CD4-positive, alpha-beta memory T cell (primary cell): ENCODE measurements at regions of chr12 and their contacts with region 1.

Region 1: DNA sequence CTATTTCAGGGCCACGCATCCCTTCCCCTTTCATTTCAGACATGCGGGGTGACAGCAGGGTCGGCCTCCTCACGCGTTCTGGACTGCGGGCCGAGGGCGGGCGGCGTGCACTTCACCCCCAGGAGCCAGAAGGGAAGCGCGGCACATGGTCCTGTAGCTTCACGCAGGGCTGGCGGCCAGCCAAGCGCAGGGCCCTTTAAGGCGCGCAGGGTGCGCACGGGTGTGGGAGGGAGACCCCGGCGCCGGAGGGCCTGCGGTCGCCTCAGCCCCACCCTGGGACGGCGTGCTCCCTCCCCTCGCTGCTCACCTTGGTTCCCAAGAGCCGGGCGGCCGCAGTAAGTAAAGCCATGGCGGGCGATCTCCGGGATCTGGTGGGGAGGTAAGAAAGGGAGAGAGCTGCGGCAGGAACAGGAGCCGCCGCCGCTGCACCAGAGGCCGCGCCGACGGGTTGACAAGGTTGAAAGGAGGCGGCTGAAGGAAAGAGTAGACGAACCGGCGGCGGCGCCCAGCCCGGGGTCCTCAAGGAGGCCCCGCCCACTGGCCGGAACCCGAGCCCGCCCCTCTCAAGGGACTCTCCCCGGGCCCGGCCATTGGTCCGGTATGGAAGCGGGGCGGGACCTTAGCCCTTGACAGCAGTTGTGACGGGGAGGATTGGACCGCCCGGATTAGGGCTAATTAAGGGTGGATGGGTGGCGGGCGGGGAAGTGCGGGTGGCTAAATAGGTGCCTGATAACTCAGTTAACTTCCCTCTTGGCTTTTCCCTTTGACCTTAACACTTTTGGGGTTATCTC is at the start of gene CS:
- DNase-seq: peak; percentile 98 to 99 (median 99)
- H3K4me3 ChIP-seq: peak within 1 kb of the TSS; percentile 79 to 97
- H3K4me3 Mint-ChIP-seq: peak within 1 kb of the TSS; percentile 90 to 97 (median 96)
- H3K27ac ChIP-seq: peak within 1 kb of the TSS; percentile 99
- H3K27ac Mint-ChIP-seq: peak within 1 kb of the TSS; percentile 95 to 99 (median 98)
- H3K4me1 ChIP-seq: peaks cover 57% of the 10 kb centered on the region
- H3K4me1 Mint-ChIP-seq: peaks cover 31 to 66% (median 50%) of the 10 kb centered on the region in 4 donors
- H3K27me3 ChIP-seq: no peaks in the 10 kb centered on the region
- H3K27me3 Mint-ChIP-seq: no peaks in the 10 kb centered on the region
- total RNA-seq, gene CS: 134 to 136 TPM

Region 2: DNA sequence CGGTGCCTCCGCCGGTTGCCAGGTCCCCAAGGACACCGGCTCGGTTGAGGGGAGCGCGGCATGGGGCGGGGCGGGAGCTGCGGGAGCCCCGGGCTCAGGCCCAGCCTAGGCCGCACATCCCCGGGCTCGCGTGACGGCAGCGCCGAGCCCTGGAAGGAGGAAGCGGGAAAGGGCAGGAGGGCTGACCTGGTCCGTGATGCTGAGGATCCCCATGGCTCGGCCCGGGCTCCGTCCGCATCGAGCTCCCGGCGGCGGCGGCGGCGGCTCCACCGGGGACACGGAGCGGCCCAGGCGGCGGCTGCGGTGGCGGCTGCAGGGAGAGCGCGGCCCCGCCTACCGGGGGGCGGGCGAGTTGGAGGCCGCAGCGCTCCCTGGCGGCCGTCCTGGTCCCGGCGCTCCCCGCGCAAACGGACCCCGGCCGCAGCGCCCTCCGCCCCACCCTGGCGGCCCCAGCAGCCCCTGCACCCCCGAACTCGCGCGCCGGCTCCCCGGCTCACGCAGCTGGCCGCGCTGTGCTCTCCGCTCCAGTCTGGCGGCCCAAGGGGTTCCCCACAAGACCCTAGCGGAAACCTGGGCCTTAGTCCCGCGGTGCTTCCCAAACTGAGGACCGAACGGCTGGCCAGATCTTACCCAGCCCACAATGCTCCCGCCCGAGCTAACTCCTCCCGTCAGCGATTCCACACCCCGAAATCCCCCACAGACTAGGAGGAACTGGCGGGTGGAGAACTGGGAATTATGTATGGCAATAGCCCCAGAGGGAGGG is 41.8 kb before region 1 on chr12 and contains the start of gene ANKRD52:
- CTCF ChIA-PET with region 1: interaction called, 5 read pairs
- POLR2A ChIA-PET with region 1: interaction called, 8 read pairs
- intact Hi-C with region 1: loop called (anchors 1 kb)
- DNase-seq: peak; percentile 76 to 87 (median 82)
- H3K4me3 ChIP-seq: peak within 1 kb of the TSS; percentile 85 to 95
- H3K4me3 Mint-ChIP-seq: peak within 1 kb of the TSS; percentile 89 to 97 (median 92)
- H3K27ac ChIP-seq: peak within 1 kb of the TSS; percentile 81
- H3K27ac Mint-ChIP-seq: peak within 1 kb of the TSS; percentile 82 to 95 (median 91)
- H3K4me1 ChIP-seq: peaks cover 21% of the 10 kb centered on the region
- H3K4me1 Mint-ChIP-seq: peaks cover 13 to 31% (median 19%) of the 10 kb centered on the region in 4 donors
- H3K27me3 ChIP-seq: no peaks in the 10 kb centered on the region
- H3K27me3 Mint-ChIP-seq: no peaks in the 10 kb centered on the region
- total RNA-seq, gene ANKRD52: 44.1 to 44.5 TPM

Region 3: GRCh38 chr12:56266693-56267442 is 33.2 kb before region 1 on chr12 and contains the start of gene COQ10A:
- CTCF ChIA-PET with region 1: interaction called, 5 read pairs
- POLR2A ChIA-PET with region 1: interaction called, 3 read pairs
- intact Hi-C with region 1: loop called (anchors 1 kb)
- DNase-seq: peak; percentile 89 to 96 (median 91)
- H3K4me3 ChIP-seq: peak within 1 kb of the TSS; percentile 27 to 90
- H3K4me3 Mint-ChIP-seq: peak within 1 kb of the TSS; percentile 89 to 99 (median 96)
- H3K27ac ChIP-seq: peak within 1 kb of the TSS; percentile 84
- H3K27ac Mint-ChIP-seq: peak within 1 kb of the TSS; percentile 90 to 99 (median 97)
- H3K4me1 ChIP-seq: peaks cover 14% of the 10 kb centered on the region
- H3K4me1 Mint-ChIP-seq: peaks cover 10 to 23% (median 16%) of the 10 kb centered on the region in 4 donors
- H3K27me3 ChIP-seq: no peaks in the 10 kb centered on the region
- H3K27me3 Mint-ChIP-seq: no peaks in the 10 kb centered on the region
- total RNA-seq, gene COQ10A: 35.3 to 38.6 TPM

Region 4: DNA sequence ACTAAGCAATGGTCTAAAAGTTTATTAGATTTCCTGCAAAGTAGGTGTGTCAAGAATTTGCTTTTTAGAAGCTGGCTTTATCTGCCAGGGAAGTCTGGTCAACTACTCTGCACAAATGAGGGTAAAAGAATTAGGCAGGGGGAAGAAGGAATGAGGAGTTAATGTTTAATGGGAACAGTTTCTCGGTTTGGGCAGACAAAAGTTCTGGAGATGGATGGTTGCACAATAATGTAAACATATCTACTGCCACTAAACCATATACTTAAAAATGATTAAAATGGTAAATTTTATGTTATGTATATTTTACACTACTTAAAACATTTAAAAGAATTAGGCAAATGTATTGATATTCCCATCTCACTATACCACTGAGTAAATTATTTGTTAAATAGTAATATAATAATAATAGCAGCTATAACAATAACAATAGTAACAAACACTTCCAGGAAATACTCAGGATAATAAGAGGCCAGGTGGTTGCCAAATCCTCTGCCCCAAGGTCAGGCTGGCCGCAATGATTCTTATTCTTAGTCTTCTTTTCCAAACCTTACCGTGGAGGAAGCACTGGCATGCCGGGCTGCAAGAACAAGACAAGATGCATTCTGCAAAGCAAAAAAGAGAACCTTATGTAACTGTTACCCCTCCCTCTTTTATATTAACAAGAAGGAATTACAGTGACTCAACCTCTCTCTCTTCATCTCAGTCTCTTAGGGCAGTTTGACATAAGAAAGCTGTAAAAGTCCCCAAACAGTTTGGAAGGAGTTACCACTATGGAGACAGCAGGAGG is 13.8 kb before region 1 on chr12:
- CTCF ChIA-PET with region 1: interaction called, 4 read pairs
- POLR2A ChIA-PET with region 1: interaction called, 10 read pairs
- intact Hi-C with region 1: loop called (anchors 1 kb)
- DNase-seq: no peak
- H3K4me3 ChIP-seq: no peak overlapping the region
- H3K4me3 Mint-ChIP-seq: no peak overlapping the region
- H3K27ac ChIP-seq: no peak overlapping the region
- H3K27ac Mint-ChIP-seq: peak overlapping the region in 6 of 7 donors; percentile 32 to 79 (median 60)
- H3K4me1 ChIP-seq: peaks cover 6% of the 10 kb centered on the region
- H3K4me1 Mint-ChIP-seq: peaks cover 6 to 18% (median 10%) of the 10 kb centered on the region in 4 donors
- H3K27me3 ChIP-seq: no peaks in the 10 kb centered on the region
- H3K27me3 Mint-ChIP-seq: no peaks in the 10 kb centered on the region

Region 5: DNA sequence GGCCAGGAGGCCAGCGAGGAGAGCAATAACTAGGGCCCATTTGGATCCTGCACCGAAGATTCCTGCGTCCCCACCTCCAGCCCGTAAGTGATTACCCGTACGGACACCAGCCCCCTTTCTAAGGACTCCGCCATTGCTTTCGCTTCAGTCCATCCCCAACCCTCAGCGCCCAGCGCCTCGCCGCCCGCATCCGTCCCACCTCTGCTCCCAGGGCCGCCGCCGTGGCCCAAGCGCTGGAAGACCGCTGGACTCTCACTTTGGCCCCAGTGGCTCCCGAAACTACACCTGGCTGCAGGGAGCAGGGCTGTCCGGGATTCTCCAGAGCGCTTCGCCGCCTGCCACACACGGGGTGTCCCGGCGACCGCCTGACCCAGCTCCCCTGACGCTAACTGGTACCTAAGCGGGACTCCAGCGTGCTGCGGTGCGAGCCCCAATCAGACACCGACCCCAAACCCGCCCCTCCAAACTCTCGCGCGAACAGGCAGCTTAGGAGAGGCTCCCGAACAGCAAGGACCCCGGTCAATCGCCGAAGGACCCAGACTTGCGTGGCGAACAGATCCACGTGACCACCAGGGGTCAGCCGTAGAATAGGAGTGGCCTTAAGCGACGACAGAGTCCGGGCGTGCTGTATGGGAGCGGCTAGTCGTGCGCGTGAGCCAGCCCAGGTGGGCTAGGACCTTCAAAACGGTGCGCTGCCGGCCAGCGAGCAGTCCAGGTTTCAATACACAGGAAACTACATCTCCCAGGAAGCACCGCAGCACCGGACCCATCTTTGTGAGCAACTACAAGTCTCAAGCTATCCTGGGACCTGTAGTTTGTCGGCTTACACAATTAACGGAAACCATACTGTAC is 15.8 kb after region 1 on chr12 and contains the start of gene CNPY2:
- CTCF ChIA-PET with region 1: interaction called, 6 read pairs
- POLR2A ChIA-PET with region 1: interaction called, 6 read pairs
- intact Hi-C with region 1: loop called (anchors 1 kb)
- DNase-seq: peak; percentile 93 to 97 (median 95)
- H3K4me3 ChIP-seq: peak within 1 kb of the TSS; percentile 99 to 100
- H3K4me3 Mint-ChIP-seq: peak within 1 kb of the TSS; percentile 97 to 100 (median 98)
- H3K27ac ChIP-seq: peak within 1 kb of the TSS; percentile 95
- H3K27ac Mint-ChIP-seq: peak within 1 kb of the TSS; percentile 98 to 100 (median 99)
- H3K4me1 ChIP-seq: peaks cover 18% of the 10 kb centered on the region
- H3K4me1 Mint-ChIP-seq: peaks cover 1 to 25% (median 13%) of the 10 kb centered on the region in 4 donors
- H3K27me3 ChIP-seq: no peaks in the 10 kb centered on the region
- H3K27me3 Mint-ChIP-seq: no peaks in the 10 kb centered on the region
- total RNA-seq, gene CNPY2: 93.5 to 95.8 TPM

Region 6: DNA sequence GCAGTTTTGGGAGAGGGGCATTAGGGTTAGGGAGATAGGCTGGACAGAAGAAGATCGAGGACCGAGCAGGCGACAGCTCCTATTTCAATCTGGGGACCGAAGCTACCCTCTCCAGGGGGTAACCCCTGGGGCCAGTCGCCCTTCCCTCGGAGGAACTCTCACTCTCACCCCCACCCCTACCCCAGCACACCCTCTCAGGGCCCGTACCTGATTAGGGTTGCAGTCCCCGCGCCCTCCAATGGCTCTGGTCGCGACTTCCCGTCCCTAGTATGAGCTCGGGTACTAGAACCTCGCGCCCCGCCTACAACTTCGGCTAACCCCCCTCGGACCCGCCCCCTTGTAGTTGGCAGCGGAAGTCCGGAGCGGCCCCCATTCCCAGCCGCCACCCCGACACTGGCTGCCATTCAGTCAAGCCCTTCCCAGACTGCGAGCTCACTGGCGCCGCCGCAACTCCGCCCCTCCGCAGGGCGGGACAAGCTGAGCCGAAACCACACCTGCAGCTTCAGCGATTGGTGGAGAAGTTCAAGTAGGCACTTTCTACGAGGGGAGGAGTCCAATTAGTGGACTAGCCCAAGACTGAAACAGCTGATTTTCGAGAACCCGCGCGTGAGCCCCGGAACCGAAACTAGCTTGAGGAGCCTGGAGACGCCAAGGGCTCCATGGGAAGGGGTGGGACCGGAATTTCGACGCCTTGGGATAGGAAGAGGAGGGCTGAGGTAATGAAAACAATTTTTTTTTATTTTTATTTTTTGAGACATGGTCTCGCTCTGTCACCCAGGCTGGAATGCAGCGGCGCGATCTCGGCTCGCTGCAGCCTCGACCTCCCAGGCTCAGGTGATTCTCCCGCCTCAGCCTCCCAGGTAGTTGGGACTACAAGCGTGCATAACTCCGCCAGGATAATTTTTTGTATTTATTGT is 60.1 kb after region 1 on chr12 and contains the start of gene STAT2:
- CTCF ChIA-PET with region 1: interaction called, 4 read pairs
- POLR2A ChIA-PET with region 1: no interaction called
- intact Hi-C with region 1: loop called (anchors 1 kb)
- DNase-seq: peak; percentile 99 to 100 (median 100)
- H3K4me3 ChIP-seq: peak within 1 kb of the TSS; percentile 78 to 97
- H3K4me3 Mint-ChIP-seq: peak within 1 kb of the TSS; percentile 92 to 98 (median 96)
- H3K27ac ChIP-seq: peak within 1 kb of the TSS; percentile 84
- H3K27ac Mint-ChIP-seq: peak within 1 kb of the TSS; percentile 89 to 98 (median 96)
- H3K4me1 ChIP-seq: peaks cover 29% of the 10 kb centered on the region
- H3K4me1 Mint-ChIP-seq: peaks cover 16 to 30% (median 21%) of the 10 kb centered on the region in 4 donors
- H3K27me3 ChIP-seq: no peaks in the 10 kb centered on the region
- H3K27me3 Mint-ChIP-seq: no peaks in the 10 kb centered on the region
- total RNA-seq, gene STAT2: 192 to 193 TPM